WTC11 (cell line): ENCODE measurements at regions of chr3 and their contacts with region 1.

Region 1: GRCh38 chr3:132730891-132731580 is 8.8 kb upstream of the NPHP3 start:
- DNase-seq: no peak
- ATAC-seq: peak; percentile 94
- H3K4me3 Mint-ChIP-seq: no peak overlapping the region
- H3K27ac Mint-ChIP-seq: no peak overlapping the region
- H3K4me1 Mint-ChIP-seq: peaks cover 10% of the 10 kb centered on the region; the same call in 1 of the 2 replicates
- H3K27me3 Mint-ChIP-seq: no peaks in the 10 kb centered on the region
- CTCF ChIP-seq: no peak

Region 2: DNA sequence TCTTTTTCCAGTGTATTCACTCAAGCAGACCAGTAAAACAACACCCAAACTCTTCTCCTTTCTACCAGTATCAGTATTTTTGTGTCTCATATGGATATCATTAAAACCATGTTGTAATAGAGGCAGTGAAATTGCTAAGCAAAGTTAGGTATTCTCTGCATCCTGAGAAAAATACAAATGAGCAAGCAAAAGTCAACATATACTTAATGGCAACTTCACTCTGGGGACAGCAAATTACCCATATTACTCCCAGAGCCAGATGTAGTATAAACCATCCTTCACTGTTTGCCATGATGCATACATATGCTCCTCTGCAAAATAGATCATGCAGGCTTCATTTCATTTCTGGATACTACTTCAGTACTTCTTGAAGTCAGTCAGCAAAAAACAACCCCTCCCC is 48.8 kb before region 1 on chr3:
- CTCF ChIA-PET with region 1: no interaction called
- POLR2A ChIA-PET with region 1: no interaction called
- DNase-seq: no peak
- ATAC-seq: no peak
- H3K4me3 Mint-ChIP-seq: no peak overlapping the region
- H3K27ac Mint-ChIP-seq: no peak overlapping the region
- H3K4me1 Mint-ChIP-seq: no peaks in the 10 kb centered on the region
- H3K27me3 Mint-ChIP-seq: no peaks in the 10 kb centered on the region
- CTCF ChIP-seq: no peak

Region 3: DNA sequence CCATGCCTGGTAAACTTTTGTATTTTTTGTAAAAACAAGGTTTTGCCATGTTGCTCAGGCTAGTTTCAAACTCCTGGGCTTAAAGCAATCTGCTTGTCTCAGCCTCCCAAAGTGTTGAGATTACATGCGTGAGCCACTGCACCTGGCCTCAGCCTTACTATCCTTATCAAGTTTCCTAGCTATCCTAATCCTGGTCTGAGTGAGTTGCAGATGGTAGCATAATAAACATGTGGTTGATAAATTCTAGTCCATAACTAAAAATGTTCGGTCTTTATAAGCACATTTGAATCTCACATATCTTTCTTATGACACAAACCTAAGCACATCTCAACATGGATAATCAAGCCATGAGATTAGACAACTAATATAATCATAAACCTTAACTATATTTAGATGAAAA is 27.3 kb before region 1 on chr3:
- CTCF ChIA-PET with region 1: no interaction called
- POLR2A ChIA-PET with region 1: no interaction called
- DNase-seq: no peak
- ATAC-seq: no peak
- H3K4me3 Mint-ChIP-seq: no peak overlapping the region
- H3K27ac Mint-ChIP-seq: no peak overlapping the region
- H3K4me1 Mint-ChIP-seq: no peaks in the 10 kb centered on the region
- H3K27me3 Mint-ChIP-seq: no peaks in the 10 kb centered on the region
- CTCF ChIP-seq: no peak

Region 4: GRCh38 chr3:133384331-133385027 is 653.4 kb after region 1 on chr3:
- CTCF ChIA-PET with region 1: interaction called, 14 read pairs
- POLR2A ChIA-PET with region 1: no interaction called
- DNase-seq: peak; percentile 78
- ATAC-seq: peak; percentile 98
- H3K4me3 Mint-ChIP-seq: no peak overlapping the region
- H3K27ac Mint-ChIP-seq: no peak overlapping the region
- H3K4me1 Mint-ChIP-seq: peaks cover 19% of the 10 kb centered on the region
- H3K27me3 Mint-ChIP-seq: no peaks in the 10 kb centered on the region
- CTCF ChIP-seq: peak; percentile 60

Region 5: GRCh38 chr3:133426721-133427120 is 695.7 kb after region 1 on chr3:
- CTCF ChIA-PET with region 1: interaction called, 19 read pairs
- POLR2A ChIA-PET with region 1: no interaction called
- DNase-seq: no peak
- ATAC-seq: no peak
- H3K4me3 Mint-ChIP-seq: no peak overlapping the region
- H3K27ac Mint-ChIP-seq: no peak overlapping the region
- H3K4me1 Mint-ChIP-seq: peaks cover 5% of the 10 kb centered on the region; the same call in 1 of the 2 replicates
- H3K27me3 Mint-ChIP-seq: no peaks in the 10 kb centered on the region
- CTCF ChIP-seq: no peak